Cardiac septum (tissue), 1 donor: ENCODE measurements at regions of chr5 and their contacts with region 1.

Region 1: GRCh38 chr5:69217548-69218526 is 16.8 kb upstream of the CDK7 start:
- DNase-seq: peak; percentile 98

Region 2: GRCh38 chr5:68932830-68933434 is 284.9 kb before region 1 on chr5:
- intact Hi-C with region 1: no loop called
- DNase-seq: no peak

Region 3: DNA sequence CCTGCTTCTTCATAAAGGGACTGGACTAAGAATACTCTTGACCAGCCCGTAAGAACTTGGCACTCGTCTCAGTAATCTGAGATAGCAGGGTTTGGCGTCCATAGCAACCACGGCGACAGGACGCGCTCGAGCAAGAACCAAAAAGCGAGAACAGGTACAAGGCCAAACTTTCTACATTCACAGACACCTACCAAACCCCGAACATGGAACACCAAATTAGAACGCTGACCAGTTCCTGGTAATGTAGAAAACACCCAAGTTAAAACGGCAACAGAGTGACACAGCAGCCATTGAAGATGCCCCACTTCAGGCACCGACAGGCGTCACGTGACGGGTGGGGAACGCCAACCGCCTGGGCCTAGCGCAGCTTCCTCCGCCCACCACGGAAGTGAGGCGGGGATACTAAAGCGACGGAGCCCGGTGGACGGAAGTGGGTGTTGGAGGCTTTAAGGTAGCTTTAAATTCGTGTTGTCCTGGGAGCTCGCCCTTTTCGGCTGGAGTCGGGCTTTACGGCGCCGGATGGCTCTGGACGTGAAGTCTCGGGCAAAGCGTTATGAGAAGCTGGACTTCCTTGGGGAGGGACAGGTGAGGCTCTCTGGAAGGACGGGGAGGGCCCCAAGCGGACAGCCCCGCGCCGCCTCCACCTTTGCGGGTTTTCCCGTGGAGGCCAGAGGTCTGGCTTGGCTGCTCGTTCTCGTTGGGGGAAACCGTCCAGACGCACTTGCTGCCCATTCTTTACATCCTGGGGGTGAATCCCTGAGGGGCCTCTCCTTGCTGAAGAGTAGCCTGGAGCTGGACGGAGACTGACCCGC is 16.8 kb after region 1 on chr5 and contains the start of gene CDK7:
- intact Hi-C with region 1: loop called (anchors 1 kb)
- DNase-seq: peak; percentile 98
- total RNA-seq, gene CDK7: 13.3 TPM